ENCODE measurements at regions of chr11 and their contacts with region 1.

Region 1: GRCh38 chr11:31958076-31958735 is 132.7 kb upstream of the RCN1 start:
- DNase-seq: no peak
- H3K4me3 ChIP-seq: no peak overlapping the region
- H3K27me3 ChIP-seq: no peaks in the 10 kb centered on the region
- CTCF ChIP-seq: peak; percentile 87

Region 2: DNA sequence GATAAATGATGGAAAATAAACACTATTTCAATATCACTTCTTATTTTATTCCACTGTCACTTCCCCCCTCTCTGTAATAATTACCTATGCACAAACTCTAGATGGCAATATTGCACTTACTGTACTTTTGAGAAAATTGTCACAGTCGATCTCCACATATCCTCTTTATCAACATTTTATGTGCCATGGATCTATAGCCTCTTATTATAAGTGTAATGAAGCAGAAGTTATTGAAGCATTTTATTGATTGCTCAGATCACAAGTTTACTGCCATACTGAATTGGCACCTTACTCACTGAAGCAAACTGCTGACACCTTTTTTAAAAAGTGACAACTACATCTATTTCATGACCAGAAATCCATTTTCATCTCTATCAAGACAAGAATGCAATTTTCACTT is 722.1 kb before region 1 on chr11:
- CTCF ChIA-PET with region 1: interaction called, 10 read pairs
- POLR2A ChIA-PET with region 1: no interaction called
- DNase-seq: no peak
- H3K4me3 ChIP-seq: no peak overlapping the region
- H3K27me3 ChIP-seq: no peaks in the 10 kb centered on the region
- CTCF ChIP-seq: no peak; the same call in 1 of the 2 replicates

Region 3: DNA sequence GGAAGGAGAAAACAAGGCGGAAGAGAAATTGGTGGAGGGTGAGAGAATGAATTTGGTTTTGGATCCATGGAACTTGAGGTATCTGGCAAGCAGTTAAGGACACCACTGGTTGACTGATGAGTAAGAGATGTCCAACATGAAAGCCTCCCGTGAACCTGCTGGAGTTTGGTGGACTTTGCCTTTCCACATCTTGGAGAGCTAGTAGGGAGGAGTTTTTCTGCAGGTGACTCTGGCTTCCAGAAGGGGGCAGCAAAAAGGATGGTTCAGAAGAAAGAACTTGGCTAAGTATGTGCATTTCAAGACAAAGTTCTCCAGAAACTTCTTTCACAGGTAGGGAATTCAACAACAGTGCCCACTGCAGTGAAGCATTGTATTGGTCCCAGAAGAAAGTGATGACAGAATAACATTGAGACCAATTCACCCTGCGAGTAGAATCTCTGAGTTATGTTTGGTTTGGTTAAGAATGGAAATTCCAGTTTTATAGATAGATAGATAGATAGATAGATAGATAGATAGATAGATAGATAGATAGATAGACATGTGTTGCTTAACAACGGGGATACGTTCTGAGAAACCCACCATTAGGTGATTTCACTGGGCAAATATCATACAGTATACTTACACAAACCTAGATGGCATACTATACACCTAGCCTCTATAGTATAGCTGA is 617.2 kb before region 1 on chr11:
- CTCF ChIA-PET with region 1: interaction called, 13 read pairs
- POLR2A ChIA-PET with region 1: no interaction called
- DNase-seq: no peak
- H3K4me3 ChIP-seq: no peak overlapping the region
- H3K27me3 ChIP-seq: no peaks in the 10 kb centered on the region
- CTCF ChIP-seq: peak; percentile 69

Region 4: DNA sequence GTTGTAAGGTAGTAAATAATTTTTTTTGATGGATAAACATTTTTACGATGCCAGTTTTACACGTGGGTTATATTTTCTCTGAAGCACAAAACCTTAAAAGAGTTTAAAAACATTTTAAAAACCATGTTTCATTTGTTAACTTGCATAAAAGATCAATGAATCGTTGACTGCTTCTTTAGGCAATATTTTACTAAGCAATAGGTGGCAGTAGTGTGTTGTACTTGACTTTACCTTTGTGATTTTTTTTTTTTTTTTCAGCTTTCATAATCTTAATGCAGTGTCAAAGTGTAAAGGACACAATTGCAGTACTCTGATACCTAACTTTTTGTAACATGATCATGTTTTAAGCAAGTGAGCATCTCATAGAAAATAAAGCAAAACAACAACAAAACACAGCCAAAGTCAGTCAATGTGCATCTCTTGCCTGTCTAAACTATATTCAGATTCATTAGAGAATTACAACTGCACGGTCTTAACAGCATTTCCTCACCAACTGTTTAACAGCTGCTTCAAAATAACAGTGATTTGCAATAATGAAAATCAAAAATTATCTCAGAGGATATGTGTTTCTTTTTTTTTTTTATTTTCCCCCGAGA is 560.9 kb before region 1 on chr11:
- CTCF ChIA-PET with region 1: interaction called, 11 read pairs
- POLR2A ChIA-PET with region 1: interaction called, 3 read pairs
- DNase-seq: no peak
- H3K4me3 ChIP-seq: no peak overlapping the region
- H3K27me3 ChIP-seq: no peaks in the 10 kb centered on the region
- CTCF ChIP-seq: peak; percentile 55

Region 5: DNA sequence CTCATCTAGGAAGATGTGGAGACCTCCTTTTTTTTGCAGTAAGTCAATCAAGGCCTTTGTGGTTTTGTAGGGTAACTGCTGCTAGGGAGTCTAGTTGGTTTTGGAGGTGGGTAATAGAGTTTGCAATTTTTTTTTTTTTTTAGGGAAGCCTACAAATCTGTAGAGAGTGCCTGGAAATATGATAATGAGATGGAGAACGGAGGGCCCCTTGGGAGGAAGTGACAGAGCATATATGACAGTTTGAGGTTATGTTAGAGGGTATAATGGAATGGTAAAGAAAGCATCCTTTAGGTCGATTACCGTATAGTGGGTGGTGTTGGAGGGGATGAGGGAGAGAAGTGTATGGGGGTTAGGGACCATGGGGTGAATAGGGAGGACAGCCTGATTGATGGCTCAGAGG is 350.3 kb before region 1 on chr11:
- CTCF ChIA-PET with region 1: no interaction called
- POLR2A ChIA-PET with region 1: no interaction called
- DNase-seq: no peak
- H3K4me3 ChIP-seq: no peak overlapping the region
- H3K27me3 ChIP-seq: no peaks in the 10 kb centered on the region
- CTCF ChIP-seq: no peak

Region 6: GRCh38 chr11:31943056-31943780 is 15.0 kb before region 1 on chr11:
- CTCF ChIA-PET with region 1: interaction called, 14 read pairs
- POLR2A ChIA-PET with region 1: no interaction called
- DNase-seq: no peak
- H3K4me3 ChIP-seq: no peak overlapping the region
- H3K27me3 ChIP-seq: no peaks in the 10 kb centered on the region; the same call in 1 of the 2 replicates
- CTCF ChIP-seq: no peak

Region 7: DNA sequence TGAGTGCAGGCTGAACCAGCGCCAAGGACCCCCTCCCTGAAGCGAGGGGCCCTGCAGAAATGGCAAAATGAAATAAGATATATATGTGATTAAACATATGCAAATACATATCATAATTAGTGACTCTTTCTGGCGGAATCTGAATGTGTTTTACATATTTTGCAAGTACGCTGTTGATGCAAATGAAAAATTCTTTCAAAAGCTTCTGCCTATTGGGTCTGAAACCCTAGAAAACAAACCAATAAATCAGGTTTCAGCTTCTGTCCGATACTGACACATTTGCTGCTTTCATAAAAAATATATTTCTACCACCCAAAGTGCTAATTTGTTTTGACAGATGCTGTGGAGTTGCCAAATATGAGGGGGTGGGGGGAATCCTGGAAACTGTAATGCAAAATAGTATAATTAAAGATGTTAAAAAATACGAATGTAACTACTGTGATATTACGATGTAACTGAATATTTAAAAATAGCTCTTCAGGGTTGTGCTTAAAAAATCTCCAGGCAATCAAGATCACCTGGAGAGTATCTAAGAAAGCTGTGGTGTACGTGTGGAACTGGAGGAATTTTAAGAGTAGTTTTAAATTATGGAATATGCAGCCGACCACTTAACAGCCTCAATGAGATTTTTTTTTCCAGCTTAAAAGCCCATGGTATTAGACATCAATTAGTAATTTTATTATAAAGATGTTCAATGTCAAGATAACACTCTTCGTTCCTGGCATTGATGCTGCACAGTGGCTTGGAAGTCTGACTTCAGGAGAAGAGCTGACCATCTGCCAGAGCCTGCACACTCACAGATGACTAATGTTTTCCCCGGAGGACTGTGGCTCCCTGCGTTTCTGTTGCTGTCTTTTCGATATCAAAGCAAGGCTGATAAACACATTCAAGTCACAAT is 10.5 kb after region 1 on chr11:
- CTCF ChIA-PET with region 1: interaction called, 21 read pairs
- POLR2A ChIA-PET with region 1: no interaction called
- DNase-seq: no peak
- H3K4me3 ChIP-seq: no peak overlapping the region
- H3K27me3 ChIP-seq: no peaks in the 10 kb centered on the region; the same call in 1 of the 2 replicates
- CTCF ChIP-seq: no peak

Region 8: DNA sequence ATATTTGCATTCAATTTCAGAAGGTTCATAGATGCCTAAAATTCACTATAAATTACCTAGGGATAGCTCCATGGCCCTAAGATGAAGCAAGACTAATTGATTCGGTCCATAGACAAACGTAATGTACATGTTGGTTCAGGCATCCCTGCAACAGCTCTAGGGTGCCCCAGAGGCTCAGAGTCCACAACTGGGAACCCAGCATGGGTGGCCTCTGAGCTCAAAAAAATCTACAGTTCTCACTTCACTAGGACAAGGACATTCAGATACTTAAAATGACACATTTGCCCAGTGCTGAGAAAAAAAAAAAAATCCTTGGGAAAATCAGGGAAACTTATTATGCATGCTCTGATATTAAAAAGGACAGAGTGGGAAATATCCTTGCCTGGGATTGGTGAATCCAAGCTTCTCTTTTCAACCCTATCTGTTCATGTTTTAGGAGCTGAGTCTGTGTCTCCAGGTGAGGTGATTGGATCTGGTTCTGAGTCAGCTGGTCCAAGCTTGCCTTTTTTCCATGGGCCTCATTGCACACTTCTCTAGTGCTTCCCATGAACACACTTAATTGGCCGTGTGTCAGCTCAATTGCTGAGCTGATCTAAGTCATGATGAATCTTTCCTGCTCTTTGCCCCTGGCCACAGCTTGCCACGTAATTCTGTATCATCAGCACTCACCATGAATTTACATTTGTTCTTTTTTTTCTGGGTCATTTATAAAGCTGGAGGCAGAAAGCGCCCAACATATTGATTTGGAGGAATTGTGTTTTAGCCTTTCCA is 16.3 kb after region 1 on chr11:
- CTCF ChIA-PET with region 1: interaction called, 21 read pairs
- POLR2A ChIA-PET with region 1: no interaction called
- DNase-seq: peak; percentile 21
- H3K4me3 ChIP-seq: no peak overlapping the region
- H3K27me3 ChIP-seq: peaks cover 2% of the 10 kb centered on the region; the same call in 1 of the 2 replicates
- CTCF ChIP-seq: no peak

Measured in BJ (cell line).